ENCODE measurements at regions of chr10 and their contacts with region 1.

Region 1: GRCh38 chr10:97445722-97446639 is at the starts of genes EXOSC1 and ZDHHC16:
- DNase-seq: peak; percentile 92
- ATAC-seq: peak; percentile 97
- H3K4me3 ChIP-seq: peak within 1 kb of the TSS; percentile 67 to 92 (median 81)
- H3K4me3 Mint-ChIP-seq: peak within 1 kb of the TSS; percentile 99
- H3K27ac ChIP-seq: peak within 1 kb of the TSS; percentile 34 to 69
- H3K27ac Mint-ChIP-seq: peak within 1 kb of the TSS; percentile 97
- H3K4me1 ChIP-seq: peaks cover 18 to 26% of the 10 kb centered on the region in 2 donors
- H3K4me1 Mint-ChIP-seq: peaks cover 41% of the 10 kb centered on the region
- H3K27me3 ChIP-seq: no peaks in the 10 kb centered on the region
- H3K27me3 Mint-ChIP-seq: no peaks in the 10 kb centered on the region
- CTCF ChIP-seq: no peak
- total RNA-seq, gene EXOSC1: 44.5 and 49.0 TPM in 2 replicates
- total RNA-seq, gene ZDHHC16: 35.6 and 41.5 TPM in 2 replicates

Region 2: GRCh38 chr10:97334370-97335175 is 111.4 kb before region 1 on chr10 and contains the start of gene FRAT2:
- CTCF ChIA-PET with region 1: no interaction called
- POLR2A ChIA-PET with region 1: no interaction called
- intact Hi-C with region 1: loop called (anchors 5 kb)
- DNase-seq: peak; percentile 98
- ATAC-seq: peak; percentile 90
- H3K4me3 ChIP-seq: peak within 1 kb of the TSS; percentile 60 to 86 (median 75)
- H3K4me3 Mint-ChIP-seq: peak within 1 kb of the TSS; percentile 88
- H3K27ac ChIP-seq: peak within 1 kb of the TSS; percentile 93 to 100
- H3K27ac Mint-ChIP-seq: peak within 1 kb of the TSS; percentile 98
- H3K4me1 ChIP-seq: peaks cover 29 to 30% of the 10 kb centered on the region in 2 donors
- H3K4me1 Mint-ChIP-seq: peaks cover 33% of the 10 kb centered on the region
- H3K27me3 ChIP-seq: no peaks in the 10 kb centered on the region
- H3K27me3 Mint-ChIP-seq: no peaks in the 10 kb centered on the region
- CTCF ChIP-seq: no peak
- total RNA-seq, gene FRAT2: 30.2 and 31.5 TPM in 2 replicates

Region 3: DNA sequence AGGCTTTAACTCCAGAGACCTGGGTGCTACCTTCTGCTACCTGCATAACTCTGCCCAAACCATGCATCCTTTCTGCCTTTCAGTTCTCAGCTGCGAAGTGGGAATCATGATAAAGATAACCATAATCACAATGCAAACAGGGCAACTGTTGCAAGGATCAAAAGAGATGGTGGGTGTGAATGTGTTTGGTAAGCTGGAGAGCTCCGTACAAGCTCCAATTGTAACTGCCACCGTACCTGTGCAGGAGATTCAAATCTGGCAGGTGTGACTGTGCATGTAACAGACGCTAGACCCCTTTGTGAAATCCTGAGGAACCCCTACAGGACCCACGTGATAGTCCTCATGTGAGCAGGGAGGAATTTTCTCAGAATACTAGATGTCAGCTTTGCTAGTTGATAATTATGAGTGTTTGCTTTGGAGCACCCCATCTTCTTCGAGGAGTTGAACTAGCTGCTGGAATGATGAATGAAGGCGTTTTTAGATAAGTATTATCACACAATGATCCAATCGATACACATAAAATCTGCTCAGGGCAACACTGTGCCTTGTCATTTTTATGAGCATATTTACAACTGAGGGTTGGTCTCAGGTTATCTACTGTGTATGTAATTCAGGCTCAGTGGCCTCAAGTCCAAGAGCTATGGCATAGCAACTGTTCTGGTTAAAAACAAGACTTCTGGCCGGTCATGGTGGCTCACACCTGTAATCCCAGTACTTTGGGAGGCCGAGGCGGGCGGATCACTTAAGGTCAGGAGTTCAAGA is 96.0 kb before region 1 on chr10:
- CTCF ChIA-PET with region 1: no interaction called
- POLR2A ChIA-PET with region 1: no interaction called
- intact Hi-C with region 1: no loop called
- DNase-seq: no peak
- ATAC-seq: no peak
- H3K4me3 ChIP-seq: no peak overlapping the region
- H3K4me3 Mint-ChIP-seq: no peak overlapping the region
- H3K27ac ChIP-seq: no peak overlapping the region
- H3K27ac Mint-ChIP-seq: no peak overlapping the region
- H3K4me1 ChIP-seq: no peaks in the 10 kb centered on the region
- H3K4me1 Mint-ChIP-seq: no peaks in the 10 kb centered on the region
- H3K27me3 ChIP-seq: no peaks in the 10 kb centered on the region
- H3K27me3 Mint-ChIP-seq: no peaks in the 10 kb centered on the region
- CTCF ChIP-seq: no peak

Region 4: DNA sequence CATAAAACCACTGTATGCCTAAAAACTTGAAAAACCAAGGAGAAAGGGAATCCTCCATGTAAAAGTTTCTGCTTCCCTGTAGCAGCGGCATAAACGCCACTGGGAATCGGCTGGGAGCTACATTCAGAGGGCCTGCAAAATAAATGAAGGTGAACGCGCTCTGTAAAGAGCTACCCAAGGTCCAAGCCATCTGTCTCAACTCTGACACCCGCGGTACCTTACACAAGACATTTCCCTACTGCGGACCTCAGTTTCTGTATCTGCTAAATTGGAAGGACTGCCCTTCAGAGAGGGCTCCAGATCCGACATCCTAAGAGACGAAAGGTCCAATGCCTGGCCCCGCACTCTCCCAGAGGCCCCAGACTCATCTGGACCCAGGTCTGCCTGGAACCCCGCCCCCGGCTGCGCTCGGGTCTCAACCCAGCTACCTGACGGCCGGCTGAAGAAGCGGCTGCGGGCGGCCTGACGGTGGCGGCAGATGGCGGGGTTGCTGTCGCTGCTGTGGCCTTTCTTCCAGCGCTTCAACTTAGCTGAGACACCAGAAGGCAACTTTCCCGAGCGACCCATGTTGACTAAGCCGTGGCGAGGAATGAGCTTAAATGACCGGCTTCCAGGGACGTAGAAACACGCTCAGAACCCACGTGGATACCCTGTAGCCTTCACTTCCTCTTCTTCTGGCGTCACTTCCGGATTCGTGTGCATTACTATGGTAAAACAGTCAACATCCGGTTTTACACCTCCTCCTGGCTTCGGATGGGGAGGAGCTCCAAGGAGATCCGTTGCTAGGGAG is 45.1 kb before region 1 on chr10 and contains the start of gene RRP12:
- CTCF ChIA-PET with region 1: interaction called, 5 read pairs
- POLR2A ChIA-PET with region 1: no interaction called
- intact Hi-C with region 1: loop called (anchors 1 kb)
- DNase-seq: peak; percentile 97
- ATAC-seq: peak; percentile 88
- H3K4me3 ChIP-seq: peak within 1 kb of the TSS; percentile 68 to 98 (median 81)
- H3K4me3 Mint-ChIP-seq: peak within 1 kb of the TSS; percentile 98
- H3K27ac ChIP-seq: peak within 1 kb of the TSS; percentile 90 to 94
- H3K27ac Mint-ChIP-seq: peak within 1 kb of the TSS; percentile 97
- H3K4me1 ChIP-seq: peaks cover 12 to 19% of the 10 kb centered on the region in 2 donors
- H3K4me1 Mint-ChIP-seq: peaks cover 15% of the 10 kb centered on the region
- H3K27me3 ChIP-seq: no peaks in the 10 kb centered on the region
- H3K27me3 Mint-ChIP-seq: no peaks in the 10 kb centered on the region
- CTCF ChIP-seq: no peak
- total RNA-seq, gene RRP12: 33.6 and 35.7 TPM in 2 replicates

Region 5: GRCh38 chr10:97407211-97407951 is 38.6 kb before region 1 on chr10:
- CTCF ChIA-PET with region 1: interaction called, 5 read pairs
- POLR2A ChIA-PET with region 1: no interaction called
- intact Hi-C with region 1: loop called (anchors 1 kb)
- DNase-seq: peak; percentile 83
- ATAC-seq: peak; percentile 96
- H3K4me3 ChIP-seq: peak overlapping the region in 2 of 5 experiments; percentile 38
- H3K4me3 Mint-ChIP-seq: peak overlapping the region; percentile 66
- H3K27ac ChIP-seq: no peak overlapping the region
- H3K27ac Mint-ChIP-seq: peak overlapping the region; percentile 69
- H3K4me1 ChIP-seq: peaks cover 0 to 12% of the 10 kb centered on the region in 2 donors
- H3K4me1 Mint-ChIP-seq: peaks cover 12% of the 10 kb centered on the region
- H3K27me3 ChIP-seq: no peaks in the 10 kb centered on the region
- H3K27me3 Mint-ChIP-seq: no peaks in the 10 kb centered on the region
- CTCF ChIP-seq: peak; percentile 85

Region 6: DNA sequence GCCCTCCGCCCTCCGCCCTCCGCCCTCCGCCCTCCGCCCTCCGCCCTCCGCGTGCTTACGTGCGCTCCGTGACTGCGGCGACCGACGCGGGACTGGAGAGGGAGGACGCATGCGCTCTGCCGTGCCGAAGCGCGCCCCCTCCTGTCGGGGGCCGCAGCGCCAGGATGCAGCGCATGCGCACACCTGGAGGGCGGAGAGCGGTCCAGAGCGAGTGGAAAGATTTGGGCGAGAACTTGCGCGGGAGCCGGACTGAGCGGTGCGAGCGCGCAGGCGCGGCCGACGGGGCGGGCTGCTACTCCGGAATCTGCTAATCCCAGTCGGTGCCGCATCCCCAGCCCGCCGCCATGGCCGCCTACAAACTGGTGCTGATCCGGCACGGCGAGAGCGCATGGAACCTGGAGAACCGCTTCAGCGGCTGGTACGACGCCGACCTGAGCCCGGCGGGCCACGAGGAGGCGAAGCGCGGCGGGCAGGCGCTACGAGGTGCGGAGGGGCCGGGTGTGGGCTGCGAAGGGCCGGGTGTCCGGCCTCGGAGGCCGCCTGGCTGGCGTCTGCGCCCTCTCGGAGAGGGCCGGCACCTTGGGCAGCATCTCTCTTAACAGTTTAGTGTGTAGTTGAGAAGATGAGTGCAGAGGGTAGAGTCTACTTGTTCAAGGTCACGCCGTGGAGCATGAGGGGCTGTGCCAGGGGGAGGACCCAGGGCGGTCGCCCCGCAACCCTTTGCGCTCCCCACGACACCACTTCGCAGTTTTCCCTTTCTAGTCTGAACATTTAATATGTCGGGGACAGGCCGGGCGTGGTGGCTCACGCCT is 19.8 kb before region 1 on chr10 and contains the start of gene PGAM1:
- CTCF ChIA-PET with region 1: interaction called, 3 read pairs
- POLR2A ChIA-PET with region 1: no interaction called
- intact Hi-C with region 1: loop called (anchors 1 kb)
- DNase-seq: peak; percentile 98
- ATAC-seq: peak; percentile 87
- H3K4me3 ChIP-seq: peak within 1 kb of the TSS; percentile 72 to 87 (median 80)
- H3K4me3 Mint-ChIP-seq: peak within 1 kb of the TSS; percentile 97
- H3K27ac ChIP-seq: peak within 1 kb of the TSS; percentile 72 to 81
- H3K27ac Mint-ChIP-seq: peak within 1 kb of the TSS; percentile 99
- H3K4me1 ChIP-seq: peaks cover 21 to 31% of the 10 kb centered on the region in 2 donors
- H3K4me1 Mint-ChIP-seq: peaks cover 43% of the 10 kb centered on the region
- H3K27me3 ChIP-seq: no peaks in the 10 kb centered on the region
- H3K27me3 Mint-ChIP-seq: no peaks in the 10 kb centered on the region
- CTCF ChIP-seq: peak; percentile 65
- total RNA-seq, gene PGAM1: 80.3 and 83.4 TPM in 2 replicates

Region 7: DNA sequence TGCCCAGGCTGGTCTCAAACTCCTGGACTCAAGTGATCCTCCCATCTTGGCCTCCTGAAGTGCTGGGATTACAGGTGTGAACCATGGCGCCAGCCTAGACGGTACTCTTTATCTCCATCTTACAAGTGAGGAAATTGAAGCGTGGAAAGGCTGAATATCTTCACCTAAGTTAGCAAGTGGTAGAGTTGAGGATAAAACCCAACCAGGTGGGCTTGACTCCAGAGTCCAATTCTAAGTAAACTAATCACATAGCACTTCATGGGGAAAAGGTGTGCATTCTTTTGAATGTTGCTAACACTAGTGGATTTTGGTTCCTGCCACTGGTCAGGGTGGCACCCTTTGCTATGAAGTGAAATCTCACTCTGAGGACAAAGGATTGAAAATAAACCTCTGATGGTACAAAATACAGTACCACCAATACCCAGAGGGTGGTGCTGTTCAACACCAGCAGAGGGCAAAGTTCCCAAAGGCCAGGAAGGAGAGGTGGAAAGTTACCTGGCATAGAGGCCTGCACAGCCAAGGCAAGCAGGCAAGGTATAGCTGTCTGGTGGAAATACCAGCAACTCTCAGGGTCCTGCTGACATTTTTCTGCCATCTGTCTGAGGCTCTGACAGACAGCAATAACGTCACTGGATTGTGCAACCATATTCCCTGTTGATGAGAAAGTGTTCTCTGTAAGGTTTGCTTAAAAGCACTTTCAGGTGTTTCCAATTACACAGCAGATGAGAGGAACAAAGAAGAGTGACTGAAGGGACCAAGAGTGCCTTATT is 17.6 kb after region 1 on chr10:
- CTCF ChIA-PET with region 1: interaction called, 3 read pairs
- POLR2A ChIA-PET with region 1: no interaction called
- intact Hi-C with region 1: loop called (anchors 2 kb)
- DNase-seq: peak; percentile 54
- ATAC-seq: peak; percentile 71
- H3K4me3 ChIP-seq: no peak overlapping the region
- H3K4me3 Mint-ChIP-seq: no peak overlapping the region
- H3K27ac ChIP-seq: no peak overlapping the region
- H3K27ac Mint-ChIP-seq: peak overlapping the region; percentile 17
- H3K4me1 ChIP-seq: no peaks in the 10 kb centered on the region
- H3K4me1 Mint-ChIP-seq: no peaks in the 10 kb centered on the region
- H3K27me3 ChIP-seq: no peaks in the 10 kb centered on the region
- H3K27me3 Mint-ChIP-seq: no peaks in the 10 kb centered on the region
- CTCF ChIP-seq: peak; percentile 86

Region 8: GRCh38 chr10:97632949-97633884 is 187.2 kb after region 1 on chr10 and contains the start of gene MORN4:
- CTCF ChIA-PET with region 1: no interaction called
- POLR2A ChIA-PET with region 1: no interaction called
- intact Hi-C with region 1: loop called (anchors 2 kb)
- DNase-seq: peak; percentile 93
- ATAC-seq: peak; percentile 99
- H3K4me3 ChIP-seq: peak within 1 kb of the TSS; percentile 34 to 87 (median 63)
- H3K4me3 Mint-ChIP-seq: peak within 1 kb of the TSS; percentile 94
- H3K27ac ChIP-seq: peak within 1 kb of the TSS in 1 of 2 donors; percentile 11
- H3K27ac Mint-ChIP-seq: peak within 1 kb of the TSS; percentile 76
- H3K4me1 ChIP-seq: peaks cover 0 to 11% of the 10 kb centered on the region in 2 donors
- H3K4me1 Mint-ChIP-seq: peaks cover 13% of the 10 kb centered on the region
- H3K27me3 ChIP-seq: peaks cover 0 to 6% (median 0%) of the 10 kb centered on the region in 4 experiments
- H3K27me3 Mint-ChIP-seq: no peaks in the 10 kb centered on the region
- CTCF ChIP-seq: no peak
- total RNA-seq, gene MORN4: 2.8 TPM in 2 replicates

Region 9: GRCh38 chr10:99172130-99172738 is 1726.3 kb after region 1 on chr10:
- CTCF ChIA-PET with region 1: no interaction called
- POLR2A ChIA-PET with region 1: no interaction called
- intact Hi-C with region 1: no loop called
- DNase-seq: no peak
- ATAC-seq: no peak
- H3K4me3 ChIP-seq: no peak overlapping the region
- H3K4me3 Mint-ChIP-seq: no peak overlapping the region
- H3K27ac ChIP-seq: no peak overlapping the region
- H3K27ac Mint-ChIP-seq: no peak overlapping the region
- H3K4me1 ChIP-seq: no peaks in the 10 kb centered on the region
- H3K4me1 Mint-ChIP-seq: no peaks in the 10 kb centered on the region
- H3K27me3 ChIP-seq: no peaks in the 10 kb centered on the region
- H3K27me3 Mint-ChIP-seq: peaks cover 19% of the 10 kb centered on the region
- CTCF ChIP-seq: no peak